ENCODE measurements at regions of chr9 and their contacts with region 1.

Region 1: DNA sequence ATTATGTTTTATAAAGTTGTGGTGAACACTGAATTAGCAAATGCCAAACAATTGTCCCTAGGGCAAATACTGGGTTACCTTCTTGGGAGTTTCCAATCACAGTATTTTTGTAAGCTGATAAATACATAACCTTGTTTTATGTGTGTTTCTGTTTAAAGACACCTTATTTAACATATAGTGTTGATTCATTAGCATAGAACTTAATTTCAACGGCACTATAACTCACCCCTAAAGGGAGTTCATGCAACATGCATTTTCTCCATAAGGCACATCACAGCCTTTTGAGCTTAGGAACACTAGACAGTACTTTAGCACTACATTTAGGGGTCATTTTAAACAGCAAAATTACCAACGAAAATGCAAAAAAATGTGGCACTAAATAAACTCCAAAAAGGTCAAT is 74.2 kb upstream of the TYRP1 start:
- DNase-seq: no peak
- ATAC-seq: no peak
- H3K4me3 ChIP-seq: no peak overlapping the region
- H3K4me3 Mint-ChIP-seq: no peak overlapping the region
- H3K27ac ChIP-seq: no peak overlapping the region
- H3K27ac Mint-ChIP-seq: no peak overlapping the region
- H3K4me1 ChIP-seq: no peaks in the 10 kb centered on the region
- H3K4me1 Mint-ChIP-seq: no peaks in the 10 kb centered on the region
- H3K27me3 ChIP-seq: no peaks in the 10 kb centered on the region
- H3K27me3 Mint-ChIP-seq: no peaks in the 10 kb centered on the region
- CTCF ChIP-seq: no peak

Region 2: DNA sequence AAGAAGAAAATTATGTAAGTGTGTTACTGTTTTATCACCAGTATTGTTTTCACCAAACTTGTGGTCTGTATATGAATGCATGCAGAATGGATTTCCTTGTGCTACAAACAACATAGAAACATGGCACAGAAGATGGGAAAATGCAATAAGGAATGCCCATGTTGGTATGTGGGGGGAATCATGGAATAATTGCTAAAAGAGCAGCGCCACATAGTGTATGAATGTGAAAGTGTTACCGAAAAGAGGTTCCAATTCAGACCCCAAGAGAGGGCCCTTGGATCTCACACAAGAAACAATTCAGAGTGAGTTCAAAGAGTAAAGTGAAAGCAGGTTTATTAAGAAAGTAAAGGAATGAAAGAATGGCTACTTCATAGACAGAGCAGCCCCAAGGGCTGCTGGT is 47.9 kb after region 1 on chr9:
- CTCF ChIA-PET with region 1: no interaction called
- POLR2A ChIA-PET with region 1: no interaction called
- intact Hi-C with region 1: loop called in 1 of 2 experiments (anchors 5 kb)
- DNase-seq: no peak
- ATAC-seq: no peak
- H3K4me3 ChIP-seq: no peak overlapping the region
- H3K4me3 Mint-ChIP-seq: no peak overlapping the region
- H3K27ac ChIP-seq: no peak overlapping the region
- H3K27ac Mint-ChIP-seq: no peak overlapping the region
- H3K4me1 ChIP-seq: no peaks in the 10 kb centered on the region
- H3K4me1 Mint-ChIP-seq: no peaks in the 10 kb centered on the region
- H3K27me3 ChIP-seq: no peaks in the 10 kb centered on the region
- H3K27me3 Mint-ChIP-seq: no peaks in the 10 kb centered on the region
- CTCF ChIP-seq: no peak

Region 3: GRCh38 chr9:12689233-12689632 is 70.3 kb after region 1 on chr9:
- CTCF ChIA-PET with region 1: no interaction called
- POLR2A ChIA-PET with region 1: no interaction called
- intact Hi-C with region 1: no loop called
- DNase-seq: no peak
- ATAC-seq: no peak
- H3K4me3 ChIP-seq: no peak overlapping the region
- H3K4me3 Mint-ChIP-seq: no peak overlapping the region
- H3K27ac ChIP-seq: no peak overlapping the region
- H3K27ac Mint-ChIP-seq: no peak overlapping the region
- H3K4me1 ChIP-seq: no peaks in the 10 kb centered on the region
- H3K4me1 Mint-ChIP-seq: no peaks in the 10 kb centered on the region
- H3K27me3 ChIP-seq: no peaks in the 10 kb centered on the region
- H3K27me3 Mint-ChIP-seq: no peaks in the 10 kb centered on the region
- CTCF ChIP-seq: no peak